Activated naive CD4-positive, alpha-beta T cell treated with anti-CD3 and anti-CD28 coated beads for 36 hours (primary cell): ENCODE measurements at regions of chr2 and their contacts with region 1.

Region 1: DNA sequence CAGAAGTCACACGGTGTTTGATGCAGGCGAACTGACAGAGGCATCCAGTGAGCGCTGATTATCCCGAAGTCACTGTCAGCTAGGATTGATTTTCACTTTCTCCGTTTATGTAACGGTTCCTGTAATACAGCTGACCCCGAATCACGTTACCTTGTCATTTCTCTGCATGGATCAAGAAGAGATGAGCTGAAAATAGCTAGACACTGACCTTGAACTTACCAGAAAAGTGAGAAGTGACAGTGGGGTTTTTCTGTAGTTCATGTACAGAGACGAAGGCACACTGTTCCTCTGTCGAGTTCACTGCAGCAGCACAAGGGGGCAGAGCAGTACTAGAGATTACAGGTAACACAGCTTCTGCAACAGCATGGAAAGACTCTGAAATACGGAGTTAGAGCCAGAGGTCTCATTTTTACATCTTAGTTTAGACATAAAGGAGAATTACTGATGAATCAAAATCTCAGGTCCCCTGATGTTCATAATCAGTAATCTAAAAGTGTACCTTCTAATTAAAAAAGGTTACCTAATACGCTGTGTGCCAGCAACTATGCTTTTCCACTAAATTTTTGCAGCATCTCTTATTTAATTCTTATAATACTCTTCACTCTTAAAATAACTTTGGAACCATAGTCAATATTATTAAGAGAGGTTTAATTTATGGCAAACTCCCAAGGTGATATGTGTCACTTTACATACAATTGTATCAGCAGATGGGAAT is 33.1 kb downstream of the ARHGAP15 start:
- DNase-seq: peak; percentile 77
- H3K4me3 Mint-ChIP-seq: peak overlapping the region; percentile 2
- H3K27ac Mint-ChIP-seq: peak overlapping the region; percentile 53
- H3K4me1 Mint-ChIP-seq: peaks cover 82% of the 10 kb centered on the region
- H3K27me3 Mint-ChIP-seq: no peaks in the 10 kb centered on the region

Region 2: DNA sequence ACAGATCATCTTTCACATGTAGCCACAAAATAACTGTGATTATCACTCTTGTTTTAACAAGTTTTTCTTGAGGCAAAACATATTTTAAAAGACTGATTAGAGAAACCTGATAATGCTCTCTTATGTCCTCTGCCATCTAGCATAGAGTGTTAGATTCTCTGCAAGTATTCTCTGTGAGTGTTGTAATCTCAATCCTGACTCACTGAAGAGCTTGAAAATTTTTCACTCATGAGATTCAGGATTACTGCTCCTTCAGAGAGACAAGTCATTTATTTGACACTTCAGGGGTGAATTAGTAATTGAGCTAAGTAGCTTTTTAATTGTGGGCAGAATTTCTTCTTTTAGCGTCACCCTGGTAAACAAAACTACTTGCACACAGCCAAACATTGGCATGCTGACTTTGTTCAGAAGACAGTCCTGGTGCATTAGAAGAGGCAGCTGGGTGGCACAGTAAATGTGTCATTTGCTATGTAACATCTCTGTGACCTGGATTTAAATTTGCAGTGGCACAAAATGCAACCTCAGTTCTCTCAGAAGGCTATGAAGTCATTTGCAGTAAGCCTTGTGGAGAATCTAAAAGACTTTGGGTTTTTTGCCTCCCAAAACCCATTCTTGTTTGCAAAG is 1204.3 kb before region 1 on chr2:
- CTCF ChIA-PET with region 1: no interaction called
- intact Hi-C with region 1: no loop called
- DNase-seq: no peak
- H3K4me3 Mint-ChIP-seq: no peak overlapping the region
- H3K27ac Mint-ChIP-seq: peak overlapping the region; percentile 24
- H3K4me1 Mint-ChIP-seq: no peaks in the 10 kb centered on the region
- H3K27me3 Mint-ChIP-seq: no peaks in the 10 kb centered on the region

Region 3: GRCh38 chr2:143034292-143035074 is 127.8 kb before region 1 on chr2:
- CTCF ChIA-PET with region 1: interaction called, 3 read pairs
- intact Hi-C with region 1: loop called (anchors 1 kb)
- DNase-seq: peak; percentile 78
- H3K4me3 Mint-ChIP-seq: no peak overlapping the region
- H3K27ac Mint-ChIP-seq: no peak overlapping the region
- H3K4me1 Mint-ChIP-seq: peaks cover 14% of the 10 kb centered on the region
- H3K27me3 Mint-ChIP-seq: peaks cover 7% of the 10 kb centered on the region

Region 4: GRCh38 chr2:143140864-143141661 is 21.2 kb before region 1 on chr2:
- CTCF ChIA-PET with region 1: interaction called, 5 read pairs
- intact Hi-C with region 1: loop called (anchors 1 kb)
- DNase-seq: peak; percentile 44
- H3K4me3 Mint-ChIP-seq: peak overlapping the region; percentile 48
- H3K27ac Mint-ChIP-seq: peak overlapping the region; percentile 78
- H3K4me1 Mint-ChIP-seq: peaks cover 86% of the 10 kb centered on the region
- H3K27me3 Mint-ChIP-seq: no peaks in the 10 kb centered on the region

Region 5: GRCh38 chr2:143205106-143205764 is 43.0 kb after region 1 on chr2:
- CTCF ChIA-PET with region 1: interaction called, 4 read pairs
- intact Hi-C with region 1: loop called (anchors 2 kb)
- DNase-seq: no peak
- H3K4me3 Mint-ChIP-seq: no peak overlapping the region
- H3K27ac Mint-ChIP-seq: peak overlapping the region; percentile 78
- H3K4me1 Mint-ChIP-seq: peaks cover 53% of the 10 kb centered on the region
- H3K27me3 Mint-ChIP-seq: no peaks in the 10 kb centered on the region

Region 6: DNA sequence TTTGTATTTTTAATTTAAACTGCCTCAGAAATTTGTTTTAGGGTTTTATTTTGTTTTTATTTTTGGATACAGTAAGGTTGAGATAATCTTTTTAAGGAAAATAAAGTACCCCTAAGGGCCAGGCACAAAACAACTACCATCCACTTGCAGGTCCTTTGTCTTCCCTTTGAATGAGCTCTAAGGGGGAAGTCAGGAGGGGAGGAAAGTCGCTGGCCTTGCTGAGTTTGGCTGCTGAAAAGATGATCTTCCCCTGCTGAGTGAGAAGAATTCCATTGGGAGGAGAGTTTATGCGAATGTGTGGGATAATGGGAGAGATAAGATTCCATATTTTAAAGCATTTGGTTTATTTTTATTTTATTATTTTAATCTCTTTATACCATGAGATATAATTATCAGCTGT is 67.7 kb after region 1 on chr2:
- CTCF ChIA-PET with region 1: interaction called, 57 read pairs
- intact Hi-C with region 1: no loop called
- DNase-seq: no peak
- H3K4me3 Mint-ChIP-seq: no peak overlapping the region
- H3K27ac Mint-ChIP-seq: no peak overlapping the region
- H3K4me1 Mint-ChIP-seq: peaks cover 20% of the 10 kb centered on the region
- H3K27me3 Mint-ChIP-seq: no peaks in the 10 kb centered on the region

Region 7: GRCh38 chr2:143334719-143335236 is 172.5 kb after region 1 on chr2:
- CTCF ChIA-PET with region 1: no interaction called
- intact Hi-C with region 1: no loop called
- DNase-seq: no peak
- H3K4me3 Mint-ChIP-seq: no peak overlapping the region
- H3K27ac Mint-ChIP-seq: peak overlapping the region; percentile 30
- H3K4me1 Mint-ChIP-seq: peaks cover 37% of the 10 kb centered on the region
- H3K27me3 Mint-ChIP-seq: no peaks in the 10 kb centered on the region

Region 8: GRCh38 chr2:143397884-143398614 is 235.8 kb after region 1 on chr2:
- CTCF ChIA-PET with region 1: interaction called, 3 read pairs
- intact Hi-C with region 1: loop called (anchors 10 kb)
- DNase-seq: no peak
- H3K4me3 Mint-ChIP-seq: no peak overlapping the region
- H3K27ac Mint-ChIP-seq: peak overlapping the region; percentile 11
- H3K4me1 Mint-ChIP-seq: peaks cover 47% of the 10 kb centered on the region
- H3K27me3 Mint-ChIP-seq: no peaks in the 10 kb centered on the region

Region 9: DNA sequence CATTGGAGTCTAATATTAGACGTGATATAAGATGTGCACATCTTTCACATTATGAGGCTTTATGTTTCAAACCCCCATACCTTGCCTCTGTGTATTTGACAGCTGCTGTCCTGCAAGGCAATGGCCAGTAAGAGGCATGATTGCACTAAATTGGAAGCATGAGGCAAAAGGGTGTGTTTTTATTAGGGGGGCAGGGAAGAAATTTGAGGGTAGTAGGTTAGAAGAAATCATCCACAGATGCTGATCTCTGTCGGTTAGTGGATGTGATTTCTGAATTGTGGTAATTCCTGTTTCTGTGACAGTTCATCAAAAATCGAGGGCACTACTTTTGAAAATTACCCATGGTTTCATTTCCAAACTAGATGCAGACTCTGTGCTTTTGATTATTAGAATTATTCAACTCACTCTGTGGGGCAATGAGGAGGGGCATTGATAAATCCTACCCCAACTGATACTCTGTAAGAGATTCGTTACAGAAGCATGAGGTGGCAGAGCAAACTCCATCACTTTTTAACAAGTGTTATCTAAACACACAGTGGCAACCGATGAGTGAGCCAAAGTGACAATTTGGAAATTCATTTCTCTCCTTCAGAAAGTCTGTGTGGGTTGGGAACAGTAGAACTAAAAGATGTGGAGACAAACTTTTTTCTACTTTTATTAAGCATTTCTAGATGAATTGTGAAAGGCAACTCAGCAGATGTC is 419.9 kb after region 1 on chr2:
- CTCF ChIA-PET with region 1: no interaction called
- intact Hi-C with region 1: no loop called
- DNase-seq: no peak
- H3K4me3 Mint-ChIP-seq: no peak overlapping the region
- H3K27ac Mint-ChIP-seq: no peak overlapping the region
- H3K4me1 Mint-ChIP-seq: peaks cover 18% of the 10 kb centered on the region
- H3K27me3 Mint-ChIP-seq: no peaks in the 10 kb centered on the region

Region 10: DNA sequence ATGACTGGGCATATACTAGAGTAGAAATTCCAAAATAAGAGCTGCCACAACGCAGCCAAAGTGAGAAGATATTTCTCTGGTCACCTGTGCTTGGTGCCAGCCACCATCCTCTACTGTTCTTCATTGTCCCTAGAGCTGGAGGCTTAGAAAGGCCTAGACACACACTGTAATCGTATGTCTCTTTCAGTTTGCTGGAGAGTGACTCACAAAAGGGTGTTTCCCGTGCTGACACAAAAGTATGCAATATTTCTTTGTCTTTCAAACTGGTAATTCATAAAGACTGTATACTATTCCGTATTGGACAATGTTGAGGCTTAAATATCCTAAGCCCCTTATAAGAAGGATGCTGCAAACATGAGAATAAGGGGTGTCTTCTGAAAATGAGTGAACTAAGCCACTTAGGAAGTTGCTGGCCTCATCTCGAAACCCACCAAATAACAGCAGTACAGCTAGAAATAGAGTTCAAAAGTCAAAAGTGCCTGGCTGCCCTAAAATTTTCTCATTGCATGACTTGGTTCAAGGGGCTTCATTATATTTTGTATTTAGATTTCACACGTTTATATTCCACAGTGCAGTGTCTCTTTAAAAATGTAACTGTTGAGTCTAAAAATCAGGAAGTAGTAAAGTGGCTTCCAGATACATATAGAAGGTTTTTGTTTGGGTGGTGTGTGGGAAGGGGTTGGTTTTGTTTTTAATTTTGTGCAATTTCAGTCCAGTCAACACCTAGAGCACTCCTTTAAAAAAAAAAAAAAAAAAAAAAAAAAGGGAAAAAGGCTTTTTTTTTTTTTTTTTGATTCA is 568.1 kb after region 1 on chr2:
- CTCF ChIA-PET with region 1: no interaction called
- intact Hi-C with region 1: loop called (anchors 1 kb)
- DNase-seq: peak; percentile 44
- H3K4me3 Mint-ChIP-seq: no peak overlapping the region
- H3K27ac Mint-ChIP-seq: peak overlapping the region; percentile 61
- H3K4me1 Mint-ChIP-seq: peaks cover 32% of the 10 kb centered on the region
- H3K27me3 Mint-ChIP-seq: no peaks in the 10 kb centered on the region